Thyroid gland (tissue), 4 donors: ENCODE measurements at regions of chr3 and their contacts with region 1.

Region 1: GRCh38 chr3:99753268-99753975 is 64.2 kb upstream of the CMSS1 start:
- DNase-seq: peak in 1 of 2 donors; percentile 16
- H3K4me3 ChIP-seq: no peak overlapping the region
- H3K27ac ChIP-seq: no peak overlapping the region
- H3K4me1 ChIP-seq: no peaks in the 10 kb centered on the region
- H3K27me3 ChIP-seq: no peaks in the 10 kb centered on the region
- CTCF ChIP-seq: peak; percentile 23 to 77 (median 68)
- POLR2A ChIP-seq: no peak

Region 2: DNA sequence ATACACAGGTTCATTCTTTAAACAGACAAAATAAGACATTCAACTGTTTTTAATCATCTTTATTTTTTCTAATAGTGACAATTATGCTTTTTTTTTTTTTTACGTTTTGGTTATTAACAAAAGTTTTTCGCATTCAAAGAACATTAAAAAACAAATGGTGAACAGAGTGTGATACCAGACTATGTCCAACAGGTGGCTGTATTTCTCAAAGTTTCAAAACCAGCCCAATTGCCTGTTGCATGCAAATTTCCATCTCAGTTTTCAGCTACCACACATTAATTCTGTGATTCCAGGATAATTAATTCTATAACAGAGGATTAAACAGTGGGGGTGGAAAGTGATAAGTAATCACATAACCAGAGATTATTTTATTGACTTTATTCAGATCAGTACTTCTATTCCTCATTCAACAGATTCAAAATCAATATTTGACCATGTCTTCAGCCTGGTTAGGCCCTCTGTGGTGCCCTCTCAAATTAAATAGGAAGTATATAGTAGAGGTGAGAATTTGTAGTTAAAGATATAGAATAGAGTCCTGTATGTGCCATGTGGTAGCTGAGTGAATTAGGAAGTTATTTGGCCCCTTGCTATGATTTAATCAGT is 729.7 kb before region 1 on chr3:
- intact Hi-C with region 1: loop called (anchors 10 kb)
- DNase-seq: no peak
- H3K4me3 ChIP-seq: no peak overlapping the region
- H3K27ac ChIP-seq: no peak overlapping the region
- H3K4me1 ChIP-seq: peaks cover 0 to 8% of the 10 kb centered on the region in 2 donors
- H3K27me3 ChIP-seq: no peaks in the 10 kb centered on the region
- CTCF ChIP-seq: peak; percentile 49 to 77 (median 59)
- POLR2A ChIP-seq: no peak

Region 3: GRCh38 chr3:99355465-99355864 is 398.0 kb before region 1 on chr3:
- intact Hi-C with region 1: no loop called
- DNase-seq: no peak
- H3K4me3 ChIP-seq: no peak overlapping the region
- H3K27ac ChIP-seq: no peak overlapping the region
- H3K4me1 ChIP-seq: no peaks in the 10 kb centered on the region
- H3K27me3 ChIP-seq: no peaks in the 10 kb centered on the region
- CTCF ChIP-seq: no peak
- POLR2A ChIP-seq: no peak

Region 4: DNA sequence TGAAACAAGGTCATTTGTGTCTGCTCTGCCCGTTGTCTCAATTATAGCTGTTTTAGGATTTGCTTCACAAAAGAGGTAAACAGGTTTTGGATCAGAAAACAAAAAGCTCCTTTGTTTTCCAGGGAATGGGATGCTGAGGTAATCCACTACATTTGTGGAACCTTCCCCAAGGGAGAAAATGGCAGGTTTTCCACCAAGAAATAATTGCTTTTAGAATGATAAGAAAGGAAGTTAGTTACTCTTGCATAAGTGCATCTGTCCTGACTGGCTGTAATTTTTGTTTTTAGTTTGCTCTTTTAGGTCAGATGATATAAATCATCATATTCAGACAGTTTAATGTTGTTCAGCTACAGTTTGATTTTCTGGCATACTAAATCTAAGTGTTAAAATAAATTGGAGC is 313.5 kb before region 1 on chr3:
- intact Hi-C with region 1: no loop called
- DNase-seq: no peak
- H3K4me3 ChIP-seq: no peak overlapping the region
- H3K27ac ChIP-seq: no peak overlapping the region
- H3K4me1 ChIP-seq: no peaks in the 10 kb centered on the region
- H3K27me3 ChIP-seq: no peaks in the 10 kb centered on the region
- CTCF ChIP-seq: no peak
- POLR2A ChIP-seq: no peak

Region 5: DNA sequence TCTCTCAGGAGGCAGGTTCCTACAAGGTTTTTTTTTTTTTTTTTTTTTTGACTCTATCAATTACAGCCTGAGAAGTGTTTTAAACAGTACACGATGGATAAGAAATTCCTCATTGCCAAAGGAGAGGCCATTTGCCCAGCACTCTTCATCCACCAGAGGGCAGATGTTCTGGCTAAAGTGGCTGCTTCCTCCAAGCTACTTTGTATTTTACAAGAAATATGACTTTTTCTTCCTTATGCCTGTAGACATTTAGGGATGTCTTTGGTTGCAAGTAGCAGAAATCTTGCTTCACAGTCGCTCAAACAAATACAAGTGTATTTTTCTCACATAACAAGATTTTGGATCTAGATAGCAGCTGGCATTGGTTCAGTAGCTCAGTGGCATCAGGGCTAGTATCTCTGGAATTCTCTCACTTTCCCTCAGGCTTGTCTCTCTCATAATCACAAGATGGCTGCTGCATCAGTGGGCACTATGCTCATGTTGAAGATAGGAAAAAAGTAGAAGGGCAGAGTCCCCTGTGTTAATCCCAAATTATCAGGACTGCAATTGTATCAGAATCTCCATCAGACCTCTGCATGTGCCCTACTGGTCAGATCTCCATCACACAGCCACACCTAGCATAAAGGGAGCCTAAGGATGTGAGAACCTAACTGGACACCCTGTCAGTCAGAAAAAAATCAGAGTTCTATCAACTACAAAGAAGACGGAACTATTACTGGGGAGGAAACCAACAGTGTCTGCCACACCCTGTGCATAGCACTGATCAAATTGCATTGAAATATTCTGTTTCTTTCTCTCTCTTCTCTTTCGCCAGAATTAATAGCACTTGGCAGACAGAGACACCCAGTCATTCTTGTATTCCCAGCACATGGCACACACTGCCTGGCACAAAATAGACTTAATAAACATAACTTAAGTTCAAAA is 253.9 kb before region 1 on chr3:
- intact Hi-C with region 1: loop called (anchors 5 kb)
- DNase-seq: peak; percentile 50 to 54
- H3K4me3 ChIP-seq: no peak overlapping the region
- H3K27ac ChIP-seq: no peak overlapping the region
- H3K4me1 ChIP-seq: no peaks in the 10 kb centered on the region
- H3K27me3 ChIP-seq: no peaks in the 10 kb centered on the region
- CTCF ChIP-seq: peak in 5 of 6 experiments; percentile 38 to 68 (median 59)
- POLR2A ChIP-seq: no peak

Region 6: DNA sequence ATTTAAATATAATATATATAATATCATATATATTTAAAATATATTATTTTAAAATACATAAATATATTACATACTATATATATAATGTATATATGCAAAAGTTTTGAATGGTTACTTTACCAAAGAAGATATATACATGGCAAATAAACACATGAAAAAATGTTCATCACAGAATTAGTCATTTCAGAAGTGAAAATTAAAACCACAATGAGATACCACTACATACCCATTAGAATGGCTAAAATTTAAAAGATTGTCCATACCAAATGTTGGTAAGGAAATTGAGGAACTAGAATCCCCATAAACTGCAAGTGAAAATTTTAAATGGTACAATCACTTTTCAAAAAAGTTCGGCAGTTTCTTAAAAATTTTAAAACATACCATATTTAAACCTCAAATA is 138.7 kb before region 1 on chr3:
- intact Hi-C with region 1: no loop called
- DNase-seq: no peak
- H3K4me3 ChIP-seq: no peak overlapping the region
- H3K27ac ChIP-seq: no peak overlapping the region
- H3K4me1 ChIP-seq: no peaks in the 10 kb centered on the region
- H3K27me3 ChIP-seq: no peaks in the 10 kb centered on the region
- CTCF ChIP-seq: no peak
- POLR2A ChIP-seq: no peak

Region 7: DNA sequence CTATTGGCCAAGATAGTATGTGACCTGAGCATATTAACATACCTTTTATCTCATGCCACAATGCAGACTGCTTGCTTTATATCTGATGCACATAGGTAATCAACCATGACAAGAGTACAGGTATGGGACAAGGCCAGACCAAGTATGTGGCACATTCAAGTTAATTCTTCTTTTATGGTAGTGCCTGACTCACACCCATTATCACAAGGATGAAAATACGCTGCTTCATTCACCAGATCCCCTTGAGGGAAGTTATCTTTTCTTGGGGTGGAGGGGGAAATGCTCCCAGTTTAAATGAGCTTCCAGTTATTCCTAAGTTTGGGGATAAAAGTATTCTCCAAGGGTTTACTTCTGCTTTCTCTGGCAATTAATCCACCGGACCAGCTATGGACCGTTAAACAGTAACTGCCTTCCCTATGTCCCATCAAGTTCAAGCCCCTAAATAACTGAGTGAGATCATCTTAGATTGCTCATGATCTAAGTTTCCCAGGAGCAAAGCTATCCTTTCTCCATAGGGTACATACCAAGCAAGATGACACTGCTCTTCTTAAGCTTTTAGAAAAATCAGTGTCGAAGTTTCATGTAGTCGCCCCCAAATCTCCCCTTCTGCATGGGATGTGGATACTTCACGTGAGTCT is 113.1 kb before region 1 on chr3:
- intact Hi-C with region 1: loop called (anchors 5 kb)
- DNase-seq: no peak
- H3K4me3 ChIP-seq: no peak overlapping the region
- H3K27ac ChIP-seq: peak overlapping the region; percentile 47 to 85 (median 79)
- H3K4me1 ChIP-seq: peaks cover 13 to 27% of the 10 kb centered on the region in 2 donors
- H3K27me3 ChIP-seq: no peaks in the 10 kb centered on the region
- CTCF ChIP-seq: no peak
- POLR2A ChIP-seq: no peak

Region 8: GRCh38 chr3:99690761-99691369 is 62.6 kb before region 1 on chr3:
- intact Hi-C with region 1: no loop called
- DNase-seq: no peak
- H3K4me3 ChIP-seq: no peak overlapping the region
- H3K27ac ChIP-seq: no peak overlapping the region
- H3K4me1 ChIP-seq: no peaks in the 10 kb centered on the region
- H3K27me3 ChIP-seq: no peaks in the 10 kb centered on the region
- CTCF ChIP-seq: no peak
- POLR2A ChIP-seq: no peak